ENCODE measurements at regions of chr6 and their contacts with region 1.

Region 1: DNA sequence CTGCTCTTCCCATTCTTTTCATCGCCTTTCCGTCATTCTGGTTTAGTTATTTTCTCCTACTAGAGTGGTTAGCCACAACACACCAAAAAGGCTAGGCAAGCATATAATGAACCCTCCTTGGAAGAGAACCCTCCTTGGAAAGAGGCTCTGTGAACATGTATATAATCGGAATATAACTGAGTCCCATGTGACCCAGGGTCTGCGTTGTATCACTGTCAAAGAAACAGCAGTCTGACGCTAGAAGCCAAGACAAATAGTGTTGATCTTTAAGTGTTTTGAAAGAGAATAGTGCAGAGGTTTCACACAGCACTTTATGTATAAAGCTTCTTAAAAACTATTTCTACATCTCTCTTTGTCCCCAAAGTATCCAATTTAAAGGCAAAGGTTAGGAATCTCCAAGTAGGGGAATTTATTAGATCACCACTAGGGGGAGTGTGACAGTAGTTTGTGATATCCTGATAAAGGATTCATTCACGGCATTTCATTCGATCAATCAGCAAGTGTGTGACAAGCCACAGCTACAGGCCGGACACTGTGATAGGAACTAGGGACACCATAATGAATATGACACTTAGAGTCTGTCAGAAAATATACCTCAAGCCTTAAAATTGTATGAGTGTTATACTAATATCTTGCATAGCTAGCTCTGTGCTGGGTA is 395.3 kb downstream of the CD109 start:
- DNase-seq: no peak
- H3K4me3 ChIP-seq: no peak overlapping the region
- H3K27ac ChIP-seq: no peak overlapping the region
- H3K27me3 ChIP-seq: no peaks in the 10 kb centered on the region
- CTCF ChIP-seq: peak; percentile 69

Region 2: GRCh38 chr6:74057326-74057725 is 33.9 kb before region 1 on chr6:
- CTCF ChIA-PET with region 1: no interaction called
- POLR2A ChIA-PET with region 1: no interaction called
- DNase-seq: no peak
- H3K4me3 ChIP-seq: no peak overlapping the region
- H3K27ac ChIP-seq: no peak overlapping the region
- H3K27me3 ChIP-seq: no peaks in the 10 kb centered on the region
- CTCF ChIP-seq: no peak

Region 3: GRCh38 chr6:74103417-74103816 is 12.2 kb after region 1 on chr6:
- CTCF ChIA-PET with region 1: interaction called, 26 read pairs
- POLR2A ChIA-PET with region 1: no interaction called
- DNase-seq: no peak
- H3K4me3 ChIP-seq: no peak overlapping the region
- H3K27ac ChIP-seq: no peak overlapping the region
- H3K27me3 ChIP-seq: no peaks in the 10 kb centered on the region
- CTCF ChIP-seq: no peak

Region 4: DNA sequence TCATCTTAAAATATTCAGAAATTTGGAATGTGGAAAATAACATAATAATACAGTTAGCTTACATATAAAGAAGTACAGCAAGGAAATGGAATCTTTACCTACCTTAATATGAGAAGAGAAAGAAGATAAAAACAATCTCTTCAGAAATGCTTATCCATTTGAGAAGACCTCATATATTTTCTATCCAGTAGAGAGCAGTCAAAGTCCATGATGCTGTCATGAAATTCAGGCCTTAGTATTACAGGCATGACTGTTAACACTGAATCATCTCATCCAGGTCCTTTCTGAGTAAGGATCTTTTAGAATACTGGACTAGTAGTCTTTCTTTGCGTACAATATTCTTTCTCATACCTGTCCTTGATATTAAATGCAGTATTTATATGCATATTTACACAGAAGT is 318.2 kb after region 1 on chr6:
- CTCF ChIA-PET with region 1: interaction called, 19 read pairs
- POLR2A ChIA-PET with region 1: no interaction called
- DNase-seq: peak; percentile 53
- H3K4me3 ChIP-seq: no peak overlapping the region
- H3K27ac ChIP-seq: no peak overlapping the region
- H3K27me3 ChIP-seq: no peaks in the 10 kb centered on the region
- CTCF ChIP-seq: peak; percentile 70

Measured in AG04450 (cell line).